CD4-positive, alpha-beta T cell (primary cell): ENCODE measurements at regions of chr7 and their contacts with region 1.

Region 1: GRCh38 chr7:157827045-157827862 is 490.4 kb downstream of the DNAJB6 start:
- DNase-seq: peak in 9 of 14 experiments; percentile 16 to 51 (median 22)
- ATAC-seq: peak; percentile 83
- H3K4me3 ChIP-seq: no peak overlapping the region
- H3K4me3 Mint-ChIP-seq: peak overlapping the region; percentile 69
- H3K27ac ChIP-seq: no peak overlapping the region
- H3K27ac Mint-ChIP-seq: peak overlapping the region; percentile 88
- H3K4me1 ChIP-seq: peaks cover 39% of the 10 kb centered on the region
- H3K4me1 Mint-ChIP-seq: peaks cover 45% of the 10 kb centered on the region
- H3K27me3 ChIP-seq: no peaks in the 10 kb centered on the region
- H3K27me3 Mint-ChIP-seq: no peaks in the 10 kb centered on the region
- CTCF ChIP-seq: no peak

Region 2: DNA sequence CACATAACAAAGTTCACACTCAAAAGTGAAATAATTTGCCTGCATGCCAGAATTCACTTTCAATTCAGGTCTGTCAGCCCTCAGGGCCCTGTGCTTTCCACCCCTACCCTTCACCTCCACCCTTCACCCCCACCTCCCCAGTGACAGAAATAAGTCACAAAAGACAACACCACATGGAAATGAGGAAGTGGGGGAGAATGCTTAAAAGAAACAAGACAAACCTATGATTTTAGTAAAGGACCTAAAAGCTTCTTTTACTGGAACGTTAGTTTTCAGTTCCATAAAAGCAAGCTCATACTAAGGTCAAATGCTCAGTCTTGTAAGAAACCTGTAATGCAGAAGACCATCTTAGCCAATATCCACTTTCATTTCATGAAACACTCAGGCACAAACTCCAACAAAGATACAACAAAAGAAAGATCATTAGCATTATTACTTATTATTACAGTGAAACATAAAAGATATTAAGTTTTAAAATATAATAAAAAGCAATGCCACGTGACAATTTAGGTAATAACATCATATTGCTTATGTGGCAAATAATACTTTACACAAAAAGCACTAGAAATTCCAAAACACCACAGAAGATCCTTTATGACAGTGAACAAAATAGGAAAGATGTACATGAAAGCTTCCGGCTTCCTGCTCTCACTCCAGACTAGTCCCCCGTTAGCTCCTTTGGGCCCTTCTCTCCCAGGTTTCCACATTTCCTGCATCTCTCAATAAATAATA is 1046.4 kb before region 1 on chr7:
- CTCF ChIA-PET with region 1: no interaction called
- POLR2A ChIA-PET with region 1: no interaction called
- intact Hi-C with region 1: no loop called
- DNase-seq: peak in 1 of 14 experiments; percentile 5
- ATAC-seq: no peak
- H3K4me3 ChIP-seq: no peak overlapping the region
- H3K4me3 Mint-ChIP-seq: no peak overlapping the region
- H3K27ac ChIP-seq: no peak overlapping the region
- H3K27ac Mint-ChIP-seq: no peak overlapping the region
- H3K4me1 ChIP-seq: no peaks in the 10 kb centered on the region
- H3K4me1 Mint-ChIP-seq: peaks cover 10% of the 10 kb centered on the region
- H3K27me3 ChIP-seq: no peaks in the 10 kb centered on the region
- H3K27me3 Mint-ChIP-seq: no peaks in the 10 kb centered on the region
- CTCF ChIP-seq: no peak

Region 3: GRCh38 chr7:157851501-157852067 is 24.3 kb after region 1 on chr7:
- CTCF ChIA-PET with region 1: no interaction called
- POLR2A ChIA-PET with region 1: interaction called, 30 read pairs
- intact Hi-C with region 1: no loop called
- DNase-seq: peak; percentile 58 to 84 (median 76)
- ATAC-seq: peak; percentile 98
- H3K4me3 ChIP-seq: peak overlapping the region; percentile 41
- H3K4me3 Mint-ChIP-seq: peak overlapping the region; percentile 57
- H3K27ac ChIP-seq: peak overlapping the region; percentile 51 to 64
- H3K27ac Mint-ChIP-seq: peak overlapping the region; percentile 88
- H3K4me1 ChIP-seq: peaks cover 13% of the 10 kb centered on the region
- H3K4me1 Mint-ChIP-seq: peaks cover 12% of the 10 kb centered on the region
- H3K27me3 ChIP-seq: no peaks in the 10 kb centered on the region
- H3K27me3 Mint-ChIP-seq: no peaks in the 10 kb centered on the region
- CTCF ChIP-seq: no peak

Region 4: DNA sequence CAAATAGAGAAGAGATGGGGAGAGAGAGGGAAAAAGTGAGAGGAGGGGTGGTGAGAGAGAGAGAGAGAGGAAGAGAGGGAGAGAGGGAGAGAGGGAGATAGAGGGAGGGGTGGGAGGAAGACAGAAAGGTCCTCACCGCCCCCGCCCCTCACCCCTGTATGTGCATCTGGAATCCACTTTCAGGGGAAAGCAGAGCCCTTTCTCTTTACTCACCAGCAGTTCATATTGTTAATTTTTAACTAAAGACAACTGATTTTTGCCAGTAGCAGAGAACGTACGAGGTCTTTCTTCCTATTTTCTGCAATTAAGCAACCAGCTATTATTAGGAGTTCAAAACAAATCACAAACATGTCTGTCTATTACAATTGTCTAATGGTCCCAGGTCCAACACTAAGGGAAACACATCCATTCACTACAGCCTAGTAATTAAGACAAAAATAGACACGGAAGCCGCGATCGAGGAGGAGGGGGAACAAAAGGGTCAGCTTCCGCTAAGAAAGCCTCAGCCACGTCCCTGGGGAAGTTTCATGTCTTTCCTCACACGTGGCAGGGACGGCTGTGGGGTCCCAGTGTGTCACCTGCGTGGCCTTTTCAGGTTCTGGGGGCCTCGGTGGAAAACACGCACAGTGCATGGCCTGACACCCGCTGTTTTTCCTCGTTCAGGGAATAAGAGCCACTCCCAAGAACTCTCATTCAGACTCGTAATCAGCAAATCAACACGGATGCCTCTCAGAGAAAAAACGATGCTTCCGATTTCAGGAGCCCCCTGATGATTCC is 188.3 kb after region 1 on chr7:
- CTCF ChIA-PET with region 1: no interaction called
- POLR2A ChIA-PET with region 1: no interaction called
- intact Hi-C with region 1: no loop called
- DNase-seq: peak in 1 of 14 experiments; percentile 16
- ATAC-seq: no peak
- H3K4me3 ChIP-seq: no peak overlapping the region
- H3K4me3 Mint-ChIP-seq: no peak overlapping the region
- H3K27ac ChIP-seq: no peak overlapping the region
- H3K27ac Mint-ChIP-seq: no peak overlapping the region
- H3K4me1 ChIP-seq: peaks cover 5% of the 10 kb centered on the region
- H3K4me1 Mint-ChIP-seq: peaks cover 13% of the 10 kb centered on the region
- H3K27me3 ChIP-seq: peaks cover 0 to 6% of the 10 kb centered on the region in 2 experiments
- H3K27me3 Mint-ChIP-seq: peaks cover 3% of the 10 kb centered on the region
- CTCF ChIP-seq: no peak